Activated T-helper 2 cell treated with anti-CD3 and anti-CD28 coated beads, Interferon-gamma antibody, Interleukin-2, Interleukin-4, amounts not matched to agents 10 μg/mL and 5 μg/mL and 100 μg/mL, durations not matched to agents 14 hours and 24 hours and 36 hours (primary cell): ENCODE measurements at regions of chr12 and their contacts with region 1.

Region 1: GRCh38 chr12:11071414-11071813 is 9.3 kb upstream of the TAS2R46 start:
- DNase-seq: no peak
- H3K4me3 Mint-ChIP-seq: no peak overlapping the region
- H3K27ac Mint-ChIP-seq: no peak overlapping the region
- H3K4me1 Mint-ChIP-seq: peaks cover 3% of the 10 kb centered on the region
- H3K27me3 Mint-ChIP-seq: no peaks in the 10 kb centered on the region

Region 2: DNA sequence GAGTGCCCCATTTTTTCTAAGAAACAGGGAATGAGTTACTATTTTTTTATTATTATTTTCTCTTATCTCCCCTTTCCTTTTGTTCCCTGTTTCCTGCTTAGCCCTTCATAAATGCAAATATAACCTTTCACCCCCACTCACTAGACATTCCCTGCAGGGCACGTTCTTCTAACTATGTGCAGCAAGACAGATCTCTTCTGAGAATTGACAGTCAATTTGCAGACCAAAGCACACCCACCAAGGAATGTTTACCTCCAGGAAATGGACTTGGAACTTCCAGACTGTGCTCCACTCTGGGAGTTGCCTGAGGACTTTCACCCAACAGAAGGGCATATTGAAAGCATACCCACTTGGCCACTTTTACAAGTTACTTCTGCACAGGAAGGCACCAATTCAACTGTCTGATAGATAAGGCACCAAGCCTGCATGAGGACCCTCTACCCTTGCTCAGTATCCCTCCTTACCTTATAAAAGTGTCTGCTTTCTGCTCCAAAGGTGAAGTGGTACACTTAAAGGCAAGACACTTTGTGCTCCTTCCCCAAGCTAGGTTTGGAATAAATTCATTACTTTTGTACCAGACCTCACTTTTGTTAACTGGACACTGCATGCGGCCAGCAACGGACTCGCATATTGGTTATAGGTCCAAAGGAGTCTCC is 55.5 kb before region 1 on chr12:
- intact Hi-C with region 1: loop called (anchors 2 kb)
- DNase-seq: no peak
- H3K4me3 Mint-ChIP-seq: no peak overlapping the region
- H3K27ac Mint-ChIP-seq: no peak overlapping the region
- H3K4me1 Mint-ChIP-seq: no peaks in the 10 kb centered on the region
- H3K27me3 Mint-ChIP-seq: no peaks in the 10 kb centered on the region